ENCODE measurements at regions of chr1 and their contacts with region 1.

Region 1: GRCh38 chr1:213008564-213008963 is 7.1 kb downstream of the ANGEL2 start:
- DNase-seq: peak in 1 of 2 donors; percentile 26
- ATAC-seq: peak; percentile 92 to 99 (median 97)
- H3K4me3 ChIP-seq: no peak overlapping the region
- H3K4me3 Mint-ChIP-seq: peak overlapping the region; percentile 78
- H3K27ac ChIP-seq: peak overlapping the region; percentile 19
- H3K27ac Mint-ChIP-seq: peak overlapping the region; percentile 53 to 64
- H3K4me1 ChIP-seq: peaks cover 5% of the 10 kb centered on the region
- H3K4me1 Mint-ChIP-seq: peaks cover 42 to 43% of the 10 kb centered on the region in 2 donors
- H3K27me3 ChIP-seq: no peaks in the 10 kb centered on the region
- H3K27me3 Mint-ChIP-seq: no peaks in the 10 kb centered on the region
- CTCF ChIP-seq: no peak

Region 2: DNA sequence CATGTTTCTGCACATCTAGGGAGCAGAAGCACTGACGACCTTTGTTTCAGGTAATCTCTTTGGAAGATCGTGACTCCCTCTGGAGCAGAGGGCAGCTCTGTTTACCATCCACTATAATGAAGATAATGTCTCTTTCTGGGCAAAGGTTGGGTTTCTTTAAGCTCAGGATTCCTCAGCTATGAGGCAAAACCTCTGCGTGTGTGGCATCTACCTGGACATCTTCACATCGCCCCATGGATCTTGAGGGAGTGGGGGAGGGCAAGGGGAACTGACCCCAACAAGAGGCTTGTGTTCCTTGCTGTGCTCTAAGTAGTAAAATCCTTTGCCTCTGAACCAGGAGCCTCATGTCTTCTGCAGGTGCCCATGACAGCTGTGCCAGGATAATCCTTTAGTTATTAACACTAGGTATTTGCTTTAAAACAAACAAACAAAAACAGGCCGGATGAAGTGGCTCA is 180.7 kb before region 1 on chr1:
- intact Hi-C with region 1: no loop called
- DNase-seq: no peak
- ATAC-seq: no peak
- H3K4me3 ChIP-seq: no peak overlapping the region
- H3K4me3 Mint-ChIP-seq: no peak overlapping the region
- H3K27ac ChIP-seq: no peak overlapping the region
- H3K27ac Mint-ChIP-seq: no peak overlapping the region
- H3K4me1 ChIP-seq: no peaks in the 10 kb centered on the region
- H3K4me1 Mint-ChIP-seq: peaks cover 0 to 6% of the 10 kb centered on the region in 2 donors
- H3K27me3 ChIP-seq: no peaks in the 10 kb centered on the region
- H3K27me3 Mint-ChIP-seq: peaks cover 0 to 16% of the 10 kb centered on the region in 2 donors
- CTCF ChIP-seq: no peak

Region 3: DNA sequence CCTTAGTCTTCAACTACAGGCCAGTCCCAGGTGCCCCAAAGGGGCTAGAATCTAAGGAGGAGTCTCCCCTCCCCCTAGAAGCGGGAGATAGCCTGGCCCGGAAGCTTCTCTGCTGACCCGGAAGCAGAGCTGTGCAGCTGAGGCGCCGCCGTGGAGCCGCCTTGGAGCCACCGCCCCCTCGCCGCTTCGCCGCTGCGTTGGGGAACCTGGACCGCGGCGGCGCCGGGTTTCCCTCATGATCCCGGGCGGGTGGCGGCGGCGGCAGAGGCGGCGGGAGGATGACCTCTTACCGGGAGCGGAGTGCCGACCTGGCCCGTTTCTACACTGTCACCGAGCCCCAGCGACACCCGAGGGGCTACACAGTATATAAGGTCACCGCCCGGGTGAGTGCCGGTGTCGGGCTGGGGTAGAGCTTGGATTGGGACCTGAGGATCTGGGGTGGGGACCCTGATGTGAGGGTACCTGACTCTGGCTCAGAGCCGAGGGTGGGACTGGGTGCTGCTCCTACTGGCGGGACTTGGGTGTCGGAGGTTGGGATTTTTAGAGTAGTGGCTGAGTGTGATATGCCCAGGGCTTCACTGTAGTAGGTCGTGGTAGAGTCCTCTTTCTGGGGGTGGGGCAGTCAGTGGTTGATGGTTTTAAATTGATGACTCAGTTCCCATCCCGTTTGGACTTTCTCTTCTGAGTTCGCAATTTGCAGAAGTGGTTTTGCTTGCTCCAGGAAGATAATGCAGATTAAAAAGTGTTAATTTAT is 42.7 kb after region 1 on chr1 and contains the start of gene RPS6KC1:
- intact Hi-C with region 1: loop called (anchors 5 kb)
- DNase-seq: peak; percentile 72 to 89
- ATAC-seq: peak; percentile 95 to 96 (median 96)
- H3K4me3 ChIP-seq: peak within 1 kb of the TSS; percentile 92
- H3K4me3 Mint-ChIP-seq: peak within 1 kb of the TSS; percentile 95
- H3K27ac ChIP-seq: peak within 1 kb of the TSS; percentile 92
- H3K27ac Mint-ChIP-seq: peak within 1 kb of the TSS; percentile 92 to 95
- H3K4me1 ChIP-seq: peaks cover 13% of the 10 kb centered on the region
- H3K4me1 Mint-ChIP-seq: peaks cover 41 to 42% of the 10 kb centered on the region in 2 donors
- H3K27me3 ChIP-seq: no peaks in the 10 kb centered on the region
- H3K27me3 Mint-ChIP-seq: peaks cover 14 to 20% of the 10 kb centered on the region in 2 donors
- CTCF ChIP-seq: peak; percentile 11
- total RNA-seq, gene RPS6KC1: 19.6 to 32.7 (median 24.1) TPM